Esophagus squamous epithelium (tissue), 5 donors: ENCODE measurements at regions of chrX and their contacts with region 1.

Region 1: DNA sequence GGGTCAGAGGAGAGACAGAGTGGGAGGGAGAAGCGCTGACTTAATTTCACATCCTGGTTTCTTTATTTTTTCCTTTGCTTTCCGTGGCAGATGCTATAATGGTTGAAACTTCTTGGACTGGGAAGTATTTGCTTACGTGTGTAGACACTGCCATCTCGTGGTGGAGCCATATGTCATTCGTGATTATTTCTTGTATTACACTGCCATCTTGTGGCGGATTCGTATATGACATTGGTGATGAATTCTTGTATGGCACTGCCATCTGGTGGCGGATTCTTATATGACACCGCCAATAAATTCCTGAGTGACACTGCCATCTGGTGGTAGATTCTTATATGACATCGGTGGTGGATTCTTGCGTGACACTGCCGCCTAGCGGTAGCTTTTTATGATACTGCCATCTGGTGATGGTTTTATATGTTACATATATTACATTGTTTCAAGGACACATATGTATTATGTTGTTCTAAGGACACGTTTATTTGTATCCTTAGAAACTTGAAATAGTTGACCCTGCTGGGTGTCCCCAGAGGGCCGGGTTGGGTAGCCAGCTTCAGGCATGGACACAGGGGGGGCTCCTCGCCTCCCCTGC is 37.3 kb upstream of the CLCN4 start:
- DNase-seq: peak; percentile 46
- H3K4me3 ChIP-seq: no peak overlapping the region
- H3K27ac ChIP-seq: peak overlapping the region in 3 of 4 donors; percentile 11 to 48 (median 33)
- H3K4me1 ChIP-seq: peaks cover 0 to 26% (median 0%) of the 10 kb centered on the region in 3 donors
- H3K27me3 ChIP-seq: no peaks in the 10 kb centered on the region
- CTCF ChIP-seq: peak; percentile 100
- POLR2A ChIP-seq: no peak

Region 2: GRCh38 chrX:9899640-9900111 is 219.8 kb before region 1 on chrX:
- intact Hi-C with region 1: loop called (anchors 10 kb)
- DNase-seq: no peak
- H3K4me3 ChIP-seq: no peak overlapping the region
- H3K27ac ChIP-seq: no peak overlapping the region
- H3K4me1 ChIP-seq: peaks cover 0 to 11% (median 0%) of the 10 kb centered on the region in 3 donors
- H3K27me3 ChIP-seq: no peaks in the 10 kb centered on the region
- CTCF ChIP-seq: no peak
- POLR2A ChIP-seq: no peak

Region 3: DNA sequence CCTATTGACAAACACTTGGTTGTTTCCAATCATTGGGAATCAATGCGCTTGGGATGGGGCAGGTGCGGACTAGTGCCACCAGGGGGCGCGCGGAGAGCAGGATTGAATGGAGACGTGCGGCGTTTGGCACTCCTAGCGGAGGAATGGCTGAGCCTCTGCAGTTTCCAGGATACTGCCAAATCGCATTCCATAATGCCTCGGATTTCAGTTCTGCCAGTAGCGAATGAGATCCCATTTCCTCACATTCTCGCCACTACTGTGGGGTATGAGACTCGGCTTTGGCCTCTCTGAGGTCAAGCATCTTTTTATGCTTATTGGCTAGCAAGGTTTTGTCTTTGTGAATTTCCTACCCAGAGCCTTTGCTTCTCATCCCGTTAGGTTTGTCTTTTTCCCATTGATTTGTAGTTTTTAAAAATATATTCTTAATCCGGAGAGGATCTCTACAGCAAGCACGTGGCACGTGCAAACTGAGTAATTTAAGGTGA is 123.6 kb before region 1 on chrX:
- intact Hi-C with region 1: loop called (anchors 5 kb)
- DNase-seq: no peak
- H3K4me3 ChIP-seq: no peak overlapping the region
- H3K27ac ChIP-seq: no peak overlapping the region
- H3K4me1 ChIP-seq: peaks cover 0 to 4% (median 0%) of the 10 kb centered on the region in 3 donors
- H3K27me3 ChIP-seq: no peaks in the 10 kb centered on the region
- CTCF ChIP-seq: peak; percentile 75 to 98 (median 96)
- POLR2A ChIP-seq: no peak

Region 4: DNA sequence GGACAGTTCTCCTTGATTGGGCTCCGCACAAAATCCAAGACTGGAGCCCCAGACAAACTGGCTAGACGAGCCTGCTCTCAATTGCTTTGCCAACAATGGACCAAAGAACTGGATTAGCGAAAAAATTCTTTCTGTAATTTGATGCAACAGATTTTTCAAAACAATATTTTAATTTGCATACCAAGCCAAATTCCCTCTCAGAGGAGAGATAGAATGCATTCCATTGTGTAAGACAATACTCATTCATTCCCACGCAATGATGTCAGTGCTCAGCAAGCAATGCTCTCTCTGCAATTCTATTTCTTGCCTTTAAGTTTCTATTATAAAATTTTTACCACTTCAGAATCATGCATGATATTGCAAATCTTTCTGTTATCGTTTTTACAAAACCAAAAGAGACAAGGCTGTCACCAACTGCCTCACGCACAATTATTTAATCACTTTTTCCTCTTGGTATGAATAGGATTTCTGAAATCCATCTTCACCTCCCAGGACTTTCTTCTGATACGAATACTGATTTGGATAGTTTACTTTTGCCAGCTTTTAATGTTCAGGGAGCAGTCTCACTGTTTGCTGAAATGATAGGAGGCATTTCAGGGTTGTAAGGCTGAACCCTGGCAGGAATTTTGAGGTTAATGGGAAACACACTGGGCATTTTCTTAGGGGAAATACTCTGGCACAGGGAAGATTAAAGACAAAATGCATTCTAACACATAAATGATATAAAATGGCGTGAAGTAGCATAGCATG is 945.5 kb after region 1 on chrX:
- intact Hi-C with region 1: no loop called
- DNase-seq: no peak
- H3K4me3 ChIP-seq: no peak overlapping the region
- H3K27ac ChIP-seq: peak overlapping the region in 1 of 4 donors; percentile 29
- H3K4me1 ChIP-seq: peaks cover 0 to 15% (median 0%) of the 10 kb centered on the region in 3 donors
- H3K27me3 ChIP-seq: no peaks in the 10 kb centered on the region
- CTCF ChIP-seq: no peak
- POLR2A ChIP-seq: no peak